Activated CD4-positive, alpha-beta memory T cell treated with anti-CD3 and anti-CD28 coated beads, Interleukin-2, amount 10 ng/mL, durations not matched to agents 7 days and 5 days (primary cell): ENCODE measurements at regions of chr17 and their contacts with region 1.

Region 1: GRCh38 chr17:34398990-34399389 is 36.0 kb upstream of the CCL1 start:
- DNase-seq: no peak
- H3K4me3 Mint-ChIP-seq: no peak overlapping the region
- H3K27ac Mint-ChIP-seq: peak overlapping the region; percentile 44
- H3K4me1 Mint-ChIP-seq: peaks cover 42% of the 10 kb centered on the region
- H3K27me3 Mint-ChIP-seq: peaks cover 26% of the 10 kb centered on the region

Region 2: GRCh38 chr17:34378664-34379101 is 20.3 kb before region 1 on chr17:
- CTCF ChIA-PET with region 1: interaction called, 14 read pairs
- POLR2A ChIA-PET with region 1: interaction called, 5 read pairs
- DNase-seq: peak; percentile 50
- H3K4me3 Mint-ChIP-seq: peak overlapping the region; percentile 44
- H3K27ac Mint-ChIP-seq: peak overlapping the region; percentile 68
- H3K4me1 Mint-ChIP-seq: peaks cover 63% of the 10 kb centered on the region
- H3K27me3 Mint-ChIP-seq: peaks cover 14% of the 10 kb centered on the region

Region 3: DNA sequence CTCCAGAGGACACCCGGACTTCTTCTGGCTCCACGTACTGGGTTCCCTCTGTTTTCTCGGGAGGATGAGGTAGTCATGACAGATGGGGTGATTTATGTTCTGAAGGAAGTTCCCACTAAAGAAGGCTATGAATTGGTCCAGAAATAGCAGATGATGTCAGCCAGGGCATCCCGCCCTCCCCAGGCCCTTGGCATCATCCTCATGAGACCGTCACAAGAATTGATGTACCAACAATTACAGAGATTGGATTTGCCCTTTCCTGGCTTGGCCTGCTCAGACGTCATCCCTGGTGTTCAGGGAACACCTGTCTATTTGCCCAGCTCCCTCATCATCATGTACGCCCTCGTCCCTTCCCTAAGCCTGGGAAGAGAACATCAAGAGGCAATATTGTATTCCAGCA is 66.8 kb after region 1 on chr17:
- CTCF ChIA-PET with region 1: no interaction called
- POLR2A ChIA-PET with region 1: no interaction called
- DNase-seq: no peak
- H3K4me3 Mint-ChIP-seq: no peak overlapping the region
- H3K27ac Mint-ChIP-seq: no peak overlapping the region
- H3K4me1 Mint-ChIP-seq: no peaks in the 10 kb centered on the region
- H3K27me3 Mint-ChIP-seq: peaks cover 8% of the 10 kb centered on the region